Posterior cingulate gyrus (tissue), 11 donors: ENCODE measurements at regions of chr1 and their contacts with region 1.

Region 1: DNA sequence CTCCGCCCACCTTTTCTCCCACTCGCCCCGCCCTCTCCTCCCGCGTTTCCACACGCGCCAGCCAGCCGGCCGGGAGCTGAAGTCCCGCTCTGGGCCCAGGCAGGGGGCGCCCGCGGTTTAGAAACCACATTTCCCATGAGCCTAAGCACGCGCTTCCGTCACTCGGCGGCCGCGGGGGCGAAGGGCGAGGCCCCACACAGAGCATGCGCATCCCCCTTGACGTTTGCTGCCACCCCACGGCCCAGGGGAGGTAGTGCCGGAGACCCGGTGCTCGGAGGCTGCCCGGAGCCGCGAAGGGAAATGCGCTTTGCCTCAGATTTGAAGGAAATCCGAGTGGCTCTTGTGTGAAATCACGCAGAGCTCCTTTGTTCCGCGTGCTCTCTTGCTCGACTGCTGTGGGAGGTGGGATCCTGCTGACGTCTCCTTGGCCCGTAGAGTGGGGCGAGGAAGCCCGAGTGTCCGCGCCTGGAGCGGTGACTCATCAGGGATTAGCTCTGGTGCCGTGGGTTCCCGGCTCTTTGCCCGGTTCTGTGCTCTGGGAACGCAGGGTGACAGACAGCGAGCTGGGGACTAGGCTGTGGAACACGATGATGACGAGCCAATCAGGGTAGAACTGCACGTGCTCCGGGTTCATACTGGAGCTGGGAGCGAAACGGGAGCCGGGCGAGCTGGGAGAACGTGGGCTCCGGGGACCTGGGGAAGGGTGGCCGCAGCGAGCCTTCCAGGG is 407 bp upstream of the B3GALNT2 start:
- DNase-seq: peak; percentile 97 to 100 (median 99)

Region 2: DNA sequence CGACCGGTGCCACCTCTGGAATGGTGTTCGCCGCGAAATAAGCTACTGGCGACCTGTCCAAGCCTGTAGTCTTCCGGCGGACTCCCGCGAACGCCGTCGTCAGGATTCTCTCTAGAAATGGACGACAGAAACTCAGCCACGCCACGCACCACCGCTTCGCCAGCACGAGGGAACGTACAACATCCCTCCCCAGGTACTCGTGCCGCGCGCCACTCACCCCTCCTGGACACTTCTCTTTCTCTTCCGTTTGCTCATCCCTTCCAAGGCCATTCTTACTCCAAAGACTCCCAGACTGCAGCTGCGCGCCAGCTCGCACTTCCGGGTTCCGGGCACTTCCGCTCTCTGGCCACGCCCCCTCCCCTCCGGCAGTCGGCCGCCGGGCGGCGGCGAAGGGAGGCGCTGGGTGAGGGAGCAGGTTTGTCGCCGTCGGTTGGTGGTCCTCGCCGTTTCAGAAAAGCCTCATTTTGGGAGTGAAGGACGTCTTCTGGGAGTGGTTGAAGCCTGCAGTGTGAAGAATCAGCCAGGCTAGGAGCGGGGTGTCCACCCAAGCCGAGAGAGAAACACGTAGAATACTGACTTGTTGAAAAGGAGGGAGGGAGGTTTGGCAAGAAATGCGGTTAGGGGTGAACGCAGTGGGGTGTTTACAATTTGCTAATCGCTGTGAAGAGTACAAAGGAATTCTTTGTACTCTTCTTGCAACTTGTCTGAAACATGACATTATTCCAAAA is 343.5 kb before region 1 on chr1 and contains the start of gene RBM34:
- intact Hi-C with region 1: loop called (anchors 5 kb)
- DNase-seq: peak; percentile 85 to 99 (median 91)

Region 3: GRCh38 chr1:235253219-235253962 is 251.3 kb before region 1 on chr1:
- intact Hi-C with region 1: loop called (anchors 10 kb)
- DNase-seq: peak in 7 of 10 donors; percentile 44 to 90 (median 57)

Region 4: DNA sequence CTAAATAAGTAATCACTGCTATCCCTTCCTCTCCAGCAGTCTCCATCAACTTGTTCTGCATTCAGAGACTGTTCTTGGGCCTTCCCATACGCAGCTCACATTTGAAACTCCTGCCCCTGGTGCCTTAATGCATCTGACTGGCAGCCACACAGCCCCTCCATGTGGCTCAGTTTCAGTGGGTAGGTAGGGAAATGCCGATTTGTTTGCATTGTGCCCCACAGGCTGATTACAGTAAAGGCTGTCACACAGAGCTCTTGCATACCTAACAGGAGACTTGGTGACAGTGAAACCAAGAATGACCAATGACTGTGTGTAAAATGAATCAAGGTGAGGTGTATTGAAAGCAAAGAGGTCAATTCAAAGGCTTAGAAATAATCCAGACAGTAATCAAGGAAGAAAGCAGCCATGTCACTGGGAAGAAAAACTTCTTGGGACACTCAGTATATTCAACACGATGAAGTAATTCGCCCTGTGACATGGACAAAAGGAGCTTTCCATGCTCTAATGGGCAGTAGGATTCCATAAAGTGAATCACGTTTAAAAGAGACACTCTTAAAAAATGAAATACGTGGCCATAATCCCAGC is 12.3 kb after region 1 on chr1:
- intact Hi-C with region 1: no loop called
- DNase-seq: no peak

Region 5: DNA sequence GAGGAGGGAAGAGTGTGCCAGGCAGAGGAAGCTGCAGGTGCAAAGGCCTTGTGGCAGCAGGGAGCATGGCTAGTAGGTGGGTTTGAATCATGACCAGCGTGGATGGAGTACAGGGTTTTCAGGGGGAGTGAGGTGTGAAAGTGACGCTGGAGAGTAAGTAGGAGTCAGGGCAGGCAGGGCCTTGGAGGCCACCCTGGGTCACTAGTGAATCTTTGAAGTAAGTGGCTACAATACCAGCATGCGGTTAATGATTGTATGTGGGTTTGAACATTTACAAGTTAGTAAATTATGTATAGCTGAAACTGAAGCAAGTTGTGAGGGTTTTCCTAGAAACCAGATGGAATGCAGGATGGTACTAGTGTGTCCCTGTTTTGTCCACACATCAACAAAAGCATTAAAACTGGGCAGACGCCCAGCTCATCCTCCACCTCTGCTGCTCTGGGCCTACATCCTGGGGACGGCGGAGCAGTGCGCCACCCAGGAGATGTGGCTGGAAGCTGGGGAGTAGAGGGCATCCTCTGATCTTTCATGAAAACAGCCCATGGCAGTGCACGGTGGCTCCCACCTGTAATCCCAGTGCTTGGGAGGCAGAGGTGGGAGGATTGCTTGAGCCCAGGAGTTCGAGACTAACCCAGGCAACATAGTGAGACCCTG is 40.7 kb after region 1 on chr1:
- intact Hi-C with region 1: no loop called
- DNase-seq: no peak

Region 6: GRCh38 chr1:235866913-235867845 is 362.5 kb after region 1 on chr1:
- intact Hi-C with region 1: loop called (anchors 10 kb)
- DNase-seq: peak; percentile 93 to 100 (median 97)